ENCODE measurements at regions of chr5 and their contacts with region 1.

Region 1: DNA sequence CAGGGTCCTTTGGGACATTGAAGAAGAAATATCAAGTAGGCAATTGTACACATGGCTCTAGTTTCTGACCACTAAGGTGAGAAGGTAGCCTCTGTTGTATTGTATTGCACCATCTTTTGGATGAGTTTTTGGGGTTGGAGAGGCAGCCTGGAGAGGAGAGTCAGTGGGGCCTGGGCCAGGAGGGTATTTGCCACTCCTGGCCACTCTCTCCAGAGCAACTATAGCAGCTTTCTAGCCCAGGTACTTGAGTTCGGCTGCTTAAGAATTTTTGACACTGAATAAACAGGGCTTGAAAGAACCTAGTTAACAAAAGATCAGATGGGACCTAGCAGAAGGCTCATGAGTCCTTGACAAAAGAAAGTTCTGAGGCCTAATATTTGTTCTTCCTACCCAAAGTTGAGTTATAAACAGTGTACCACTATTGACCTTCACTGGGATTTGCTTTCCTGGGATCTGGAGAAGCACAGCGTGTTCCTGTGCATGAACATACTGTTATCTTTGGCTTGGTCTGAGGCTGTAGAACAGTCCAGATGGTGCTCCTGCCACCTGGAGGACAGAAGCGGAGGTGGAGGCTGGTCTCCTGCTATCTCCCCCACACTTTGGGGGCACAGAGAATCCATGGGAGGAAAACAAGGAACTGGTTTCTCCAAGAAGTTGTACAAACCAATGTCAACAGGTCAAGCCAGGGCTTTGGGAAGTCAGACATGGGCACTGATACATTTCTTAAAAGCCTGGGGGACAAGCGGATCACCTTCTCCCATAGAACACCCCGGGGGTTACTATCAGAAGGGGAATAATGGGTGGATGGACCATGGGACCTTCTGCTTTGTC is 110.4 kb upstream of the LIFR start:
- DNase-seq: peak; percentile 38 to 61
- ATAC-seq: peak; percentile 92 to 97
- H3K4me3 ChIP-seq: no peak overlapping the region
- H3K27ac ChIP-seq: peak overlapping the region; percentile 44 to 79 (median 70)
- H3K4me1 ChIP-seq: peaks cover 30 to 33% of the 10 kb centered on the region in 2 donors
- H3K27me3 ChIP-seq: no peaks in the 10 kb centered on the region
- CTCF ChIP-seq: peak; percentile 67 to 86 (median 84)
- POLR2A ChIP-seq: no peak

Region 2: DNA sequence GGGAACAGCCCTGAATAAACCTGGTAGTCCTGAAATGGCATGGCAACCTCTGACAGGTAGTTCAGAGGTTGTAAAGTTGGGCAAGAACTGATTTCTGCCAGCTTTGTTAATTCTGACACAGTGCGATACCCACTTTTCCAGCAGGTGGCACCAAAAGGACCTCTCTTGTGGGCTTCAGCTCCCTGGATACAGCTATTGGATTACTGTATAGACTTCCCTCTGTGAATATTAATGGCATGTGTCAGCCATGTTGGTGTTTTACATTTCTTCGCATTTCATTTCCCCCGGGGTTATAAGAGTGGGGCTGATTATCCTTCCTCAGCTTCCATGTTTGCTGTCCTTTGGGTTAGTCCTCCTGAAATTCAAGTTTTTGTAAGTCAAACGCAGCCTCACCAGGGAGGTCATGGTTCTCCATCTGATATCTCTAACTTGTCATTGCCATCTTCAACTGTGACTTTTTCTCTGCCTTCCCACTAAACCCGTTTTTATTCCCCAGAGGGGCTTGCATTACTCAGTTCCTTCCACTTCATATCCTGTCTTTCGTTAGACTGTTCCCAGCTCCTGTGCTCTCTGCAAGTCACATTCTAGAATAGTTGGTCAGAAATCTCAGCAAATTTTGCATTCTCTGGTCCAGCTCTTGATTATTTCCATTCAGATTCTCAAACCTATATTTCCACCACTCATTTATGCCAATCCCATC is 246.0 kb before region 1 on chr5:
- in situ Hi-C with region 1: no loop called
- intact Hi-C with region 1: loop called (anchors 5 kb)
- DNase-seq: peak; percentile 7 to 44
- ATAC-seq: peak; percentile 81 to 83
- H3K4me3 ChIP-seq: no peak overlapping the region
- H3K27ac ChIP-seq: no peak overlapping the region
- H3K4me1 ChIP-seq: no peaks in the 10 kb centered on the region
- H3K27me3 ChIP-seq: no peaks in the 10 kb centered on the region
- CTCF ChIP-seq: peak; percentile 49 to 75 (median 68)
- POLR2A ChIP-seq: no peak

Region 3: GRCh38 chr5:38497946-38498345 is 168.9 kb before region 1 on chr5:
- in situ Hi-C with region 1: no loop called
- intact Hi-C with region 1: loop called (anchors 2 kb)
- DNase-seq: no peak
- ATAC-seq: peak in 1 of 2 donors; percentile 55
- H3K4me3 ChIP-seq: no peak overlapping the region
- H3K27ac ChIP-seq: no peak overlapping the region
- H3K4me1 ChIP-seq: no peaks in the 10 kb centered on the region
- H3K27me3 ChIP-seq: no peaks in the 10 kb centered on the region
- CTCF ChIP-seq: no peak
- POLR2A ChIP-seq: no peak

Region 4: DNA sequence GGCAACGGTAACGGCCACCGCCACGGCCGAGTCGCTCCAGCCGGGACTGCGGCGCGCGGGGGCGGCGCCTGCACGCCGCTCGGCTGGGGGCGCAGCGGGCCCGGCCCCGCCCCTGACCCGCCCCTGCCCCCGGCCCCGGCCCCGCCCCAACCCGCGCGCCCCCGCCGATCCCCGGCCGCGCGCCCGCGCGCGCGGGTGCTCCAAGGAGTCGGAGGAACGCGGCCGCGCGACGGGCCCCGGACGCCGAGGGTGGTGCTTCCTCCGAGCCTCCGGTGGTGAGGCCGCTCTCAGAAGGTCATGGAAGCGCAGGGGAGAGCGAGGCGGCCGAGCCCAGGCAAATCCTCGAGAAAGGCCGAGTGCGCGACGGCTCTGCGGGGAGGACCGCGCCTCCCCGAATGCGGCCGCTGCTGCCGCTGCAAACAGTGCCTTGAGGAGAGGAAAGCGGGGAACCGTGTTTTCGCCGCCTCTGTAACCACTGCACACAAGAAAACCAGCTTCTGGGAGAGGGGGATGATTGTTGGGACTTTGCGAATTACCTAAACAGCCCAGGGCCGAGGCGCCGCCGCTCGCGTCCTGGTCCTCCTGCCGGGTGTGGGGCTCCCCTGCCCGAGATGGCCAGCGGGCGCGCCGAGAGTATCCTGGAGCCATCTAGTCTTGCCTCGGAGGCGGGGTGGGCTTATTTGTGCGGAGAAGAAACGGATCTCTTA is 110.1 kb before region 1 on chr5 and contains the start of gene LIFR:
- in situ Hi-C with region 1: loop called in 2 of 4 experiments (anchors 10 to 25 kb)
- intact Hi-C with region 1: loop called (anchors 2 kb)
- DNase-seq: peak; percentile 59 to 79
- ATAC-seq: peak; percentile 79 to 88
- H3K4me3 ChIP-seq: peak within 1 kb of the TSS; percentile 89 to 94 (median 92)
- H3K27ac ChIP-seq: peak within 1 kb of the TSS; percentile 97 to 99 (median 98)
- H3K4me1 ChIP-seq: peaks cover 19 to 51% of the 10 kb centered on the region in 2 donors
- H3K27me3 ChIP-seq: no peaks in the 10 kb centered on the region
- CTCF ChIP-seq: peak in 2 of 5 experiments; percentile 18 to 25
- POLR2A ChIP-seq: peak; percentile 77 to 86
- total RNA-seq, gene LIFR: 80.0 to 233 (median 89.5) TPM

Region 5: GRCh38 chr5:38607396-38607795 is 59.5 kb before region 1 on chr5:
- in situ Hi-C with region 1: no loop called
- intact Hi-C with region 1: loop called (anchors 5 kb)
- DNase-seq: peak; percentile 19 to 55
- ATAC-seq: peak; percentile 76 to 94
- H3K4me3 ChIP-seq: no peak overlapping the region
- H3K27ac ChIP-seq: peak overlapping the region; percentile 28 to 75 (median 61)
- H3K4me1 ChIP-seq: peaks cover 13 to 37% of the 10 kb centered on the region in 2 donors
- H3K27me3 ChIP-seq: no peaks in the 10 kb centered on the region
- CTCF ChIP-seq: no peak
- POLR2A ChIP-seq: no peak

Region 6: DNA sequence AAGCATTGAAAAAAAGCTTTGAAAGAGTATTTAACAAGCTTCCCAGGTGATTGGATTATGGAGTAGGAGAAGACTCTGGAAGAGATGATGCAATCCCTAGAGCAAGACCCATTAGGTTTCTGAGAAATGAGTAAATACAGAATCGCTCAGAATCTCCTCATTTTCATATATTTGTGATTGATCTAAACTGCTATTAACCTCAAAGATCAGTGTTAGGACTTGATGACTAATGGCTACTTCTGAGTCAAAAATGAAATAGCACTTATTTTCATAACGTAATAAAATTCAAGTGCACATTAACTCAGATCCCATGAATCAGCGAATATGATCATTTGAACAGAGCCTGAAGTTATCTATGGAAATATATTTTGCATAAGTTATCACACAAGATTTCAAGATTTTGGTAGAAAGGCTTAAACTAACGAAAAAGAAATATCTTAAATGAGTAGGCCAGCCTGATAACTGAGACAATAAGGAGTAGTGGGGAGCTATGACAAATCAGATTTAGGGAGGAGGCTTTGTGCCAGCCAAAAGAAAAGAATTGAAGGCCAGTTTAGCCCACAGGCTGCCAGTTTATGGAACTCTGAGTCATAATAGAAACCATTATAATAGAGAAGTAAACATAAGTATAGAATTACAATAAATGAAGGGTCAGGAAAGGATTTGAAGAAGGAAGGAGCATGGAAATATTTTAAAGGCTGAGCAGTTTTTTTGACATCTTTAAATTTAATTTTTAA is 72.3 kb after region 1 on chr5:
- in situ Hi-C with region 1: no loop called
- intact Hi-C with region 1: no loop called
- DNase-seq: no peak
- ATAC-seq: no peak
- H3K4me3 ChIP-seq: no peak overlapping the region
- H3K27ac ChIP-seq: no peak overlapping the region
- H3K4me1 ChIP-seq: no peaks in the 10 kb centered on the region
- H3K27me3 ChIP-seq: no peaks in the 10 kb centered on the region
- CTCF ChIP-seq: no peak
- POLR2A ChIP-seq: no peak

Region 7: DNA sequence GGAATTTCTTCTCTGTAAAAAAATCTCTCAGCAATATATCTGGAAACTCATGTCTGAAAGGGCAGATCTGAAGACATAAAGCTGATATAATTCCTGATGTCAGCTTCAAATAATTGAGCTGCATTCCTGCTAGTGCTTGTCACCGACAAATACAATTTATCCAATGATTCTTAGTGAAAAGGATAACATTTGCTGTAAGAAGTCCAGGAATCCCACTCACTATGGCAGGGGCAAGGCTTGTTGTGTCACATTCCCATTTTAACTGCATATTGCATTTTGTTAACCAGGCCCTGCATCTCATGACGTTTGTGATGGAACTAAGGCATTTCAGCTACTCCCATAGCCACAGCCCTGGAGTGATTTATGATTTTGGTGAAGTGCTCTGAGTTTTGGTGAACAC is 918.0 kb after region 1 on chr5:
- in situ Hi-C with region 1: no loop called
- intact Hi-C with region 1: no loop called
- DNase-seq: no peak
- ATAC-seq: no peak
- H3K4me3 ChIP-seq: no peak overlapping the region
- H3K27ac ChIP-seq: no peak overlapping the region
- H3K4me1 ChIP-seq: no peaks in the 10 kb centered on the region
- H3K27me3 ChIP-seq: no peaks in the 10 kb centered on the region
- CTCF ChIP-seq: no peak
- POLR2A ChIP-seq: no peak

Measured in gastrocnemius medialis (tissue), 4 donors.